ENCODE measurements at regions of chr12 and their contacts with region 1.

Region 1: DNA sequence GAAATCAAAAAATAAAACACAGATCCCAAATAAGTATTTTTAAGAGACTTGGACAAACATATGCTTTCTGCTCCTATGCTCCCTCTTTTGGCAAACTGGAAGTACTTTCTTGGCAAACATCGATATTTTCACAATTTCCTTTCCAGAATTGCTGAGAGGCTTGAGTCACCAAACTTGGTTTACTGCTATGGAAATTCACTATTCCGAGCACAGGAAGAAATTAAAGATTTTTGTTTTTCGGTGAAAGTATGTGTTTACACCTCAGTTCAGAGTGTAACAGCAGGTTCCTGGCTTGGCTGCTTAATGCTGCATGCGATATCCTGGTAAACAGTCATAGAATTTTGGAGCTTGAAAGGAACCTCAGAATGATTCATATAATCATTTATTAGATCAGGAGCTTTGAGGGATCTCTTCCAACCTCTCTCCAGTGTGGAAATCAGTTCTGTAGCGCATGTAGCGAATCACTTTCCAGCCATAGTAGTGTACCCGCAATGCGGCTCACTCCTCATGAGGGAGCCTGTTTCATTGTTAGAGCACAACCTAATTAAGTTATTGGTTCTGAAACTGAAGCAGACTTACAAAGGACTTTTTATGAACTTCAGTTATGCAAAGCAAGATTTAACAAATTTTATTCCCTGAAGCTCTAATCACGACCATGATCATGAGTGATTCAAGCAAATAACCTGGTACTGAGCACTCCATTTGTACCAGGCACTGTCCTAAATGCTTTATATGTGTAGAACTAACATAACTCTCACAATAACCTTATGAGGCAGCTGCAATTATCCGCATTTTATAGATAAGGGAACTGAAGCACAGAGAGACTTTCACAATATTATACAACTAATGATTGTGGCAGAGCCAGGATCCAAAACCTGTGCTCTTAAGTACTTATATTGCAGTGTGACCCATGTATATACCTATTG is 56.4 kb upstream of the ATP2A2 start:
- DNase-seq: no peak
- ATAC-seq: peak; percentile 87
- H3K4me3 ChIP-seq: peak overlapping the region in 1 of 2 donors; percentile 64
- H3K27ac ChIP-seq: peak overlapping the region; percentile 39 to 82
- H3K4me1 ChIP-seq: peaks cover 3 to 9% of the 10 kb centered on the region in 2 donors
- H3K27me3 ChIP-seq: no peaks in the 10 kb centered on the region

Region 2: DNA sequence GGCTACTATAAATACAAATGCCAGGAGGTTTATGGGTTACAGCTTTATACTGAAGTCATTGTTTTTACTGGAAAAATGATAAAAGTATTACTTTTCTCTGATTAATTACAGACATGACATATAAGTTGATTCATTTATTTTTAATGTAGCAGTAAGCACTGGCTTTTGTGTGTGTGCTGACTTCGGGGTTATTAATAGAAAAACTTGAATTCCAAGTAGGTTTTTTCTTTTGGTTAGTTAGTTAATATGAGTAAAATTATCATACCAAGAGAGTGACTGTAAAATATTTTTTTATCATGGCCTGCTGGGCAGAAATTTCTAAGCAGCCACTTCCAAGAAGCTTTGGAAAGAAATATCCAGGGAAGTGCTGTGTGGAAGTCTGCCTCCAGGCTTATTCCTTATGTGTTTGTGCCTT is 44.0 kb before region 1 on chr12:
- intact Hi-C with region 1: loop called in 1 of 2 experiments (anchors 5 kb)
- DNase-seq: no peak
- ATAC-seq: peak; percentile 63
- H3K4me3 ChIP-seq: no peak overlapping the region
- H3K27ac ChIP-seq: peak overlapping the region in 1 of 2 donors; percentile 76
- H3K4me1 ChIP-seq: peaks cover 0 to 9% of the 10 kb centered on the region in 2 donors
- H3K27me3 ChIP-seq: no peaks in the 10 kb centered on the region

Region 3: DNA sequence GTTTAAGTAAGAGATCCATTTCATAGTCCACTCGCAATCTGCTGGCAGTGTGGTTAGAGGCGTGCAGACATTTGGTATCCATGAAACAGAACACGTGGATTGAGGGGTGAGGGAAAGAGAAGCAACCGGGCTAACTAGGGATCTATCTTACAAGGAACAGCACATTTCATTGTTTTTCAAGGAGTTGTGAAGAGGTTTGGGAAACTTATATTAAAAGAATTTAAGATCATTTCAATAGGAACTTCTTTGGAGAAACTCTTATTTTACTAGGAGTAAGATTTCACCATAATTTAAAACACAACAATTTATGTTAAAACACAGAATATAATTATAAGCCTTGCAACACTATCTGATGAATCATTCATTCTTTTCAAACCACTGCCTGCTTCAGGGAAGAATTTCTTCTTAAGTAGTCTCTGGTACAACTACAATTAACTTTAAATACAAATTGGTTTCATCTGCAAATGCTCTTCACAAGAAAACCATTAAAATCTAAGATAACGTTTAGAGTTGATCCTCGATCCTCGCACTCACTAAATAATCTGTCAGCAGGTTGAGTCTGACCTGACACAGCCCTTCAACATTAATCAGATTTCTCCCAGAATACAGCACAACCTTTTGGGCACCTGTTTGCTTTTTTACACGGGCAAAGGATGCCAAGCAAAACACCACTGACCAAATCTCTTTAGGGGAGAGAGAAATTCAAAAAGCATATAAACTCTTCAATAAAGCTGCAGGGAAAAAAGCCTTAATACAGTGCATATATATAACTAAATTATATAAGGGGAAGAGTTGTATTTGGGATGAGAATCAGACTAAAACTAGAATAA is 331.1 kb after region 1 on chr12:
- intact Hi-C with region 1: no loop called
- DNase-seq: no peak
- ATAC-seq: no peak
- H3K4me3 ChIP-seq: no peak overlapping the region
- H3K27ac ChIP-seq: no peak overlapping the region
- H3K4me1 ChIP-seq: no peaks in the 10 kb centered on the region
- H3K27me3 ChIP-seq: no peaks in the 10 kb centered on the region